MCF 10A (cell line): ENCODE measurements at regions of chrX and their contacts with region 1.

Region 1: DNA sequence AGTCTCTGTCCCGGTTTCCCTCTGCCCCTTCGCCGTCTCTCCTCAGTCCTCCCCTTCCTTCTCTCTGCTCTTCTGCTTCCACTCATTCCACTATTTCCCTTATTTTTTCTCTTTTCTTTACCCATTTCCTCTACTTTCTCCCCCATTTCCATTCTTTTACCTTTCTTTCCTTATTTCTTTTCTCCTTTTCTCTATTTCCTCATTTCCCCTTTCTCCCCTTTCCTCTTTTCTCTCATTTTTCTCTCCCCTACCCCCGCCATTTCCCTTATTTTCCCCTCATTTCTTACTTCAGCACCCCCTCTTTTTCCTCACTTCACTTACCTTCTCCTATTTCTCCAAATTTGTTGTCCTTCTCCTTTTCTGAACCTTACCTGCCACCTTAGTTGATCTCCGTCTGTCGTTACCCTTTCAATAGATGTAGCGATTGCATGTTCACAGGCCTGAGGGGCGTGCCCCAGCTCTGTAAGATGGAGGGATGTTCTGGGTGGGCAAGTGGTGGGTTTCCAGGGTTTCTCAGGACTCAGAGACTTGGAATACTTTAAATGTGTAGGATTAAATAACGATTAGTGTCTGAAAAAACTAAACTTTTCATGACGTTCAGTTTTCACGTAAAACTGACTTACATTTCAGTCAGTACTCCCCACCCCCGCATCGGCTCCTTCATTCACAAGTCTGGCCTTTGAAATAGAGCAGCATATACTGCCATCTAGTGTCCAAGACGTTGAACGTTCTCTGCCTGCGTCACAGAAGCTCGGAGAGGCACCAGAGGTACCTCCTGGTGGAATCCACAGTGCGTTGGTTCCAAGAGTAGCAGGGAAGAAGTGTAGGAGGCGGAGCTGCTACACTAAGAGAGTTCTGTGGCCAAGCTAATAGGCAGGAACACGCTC is 641 bp upstream of the NCBP2L start:
- DNase-seq: peak; percentile 87
- H3K4me3 Mint-ChIP-seq: peak overlapping the region; percentile 76
- H3K27ac Mint-ChIP-seq: peak overlapping the region; percentile 41
- H3K4me1 Mint-ChIP-seq: peaks cover 18% of the 10 kb centered on the region
- H3K27me3 Mint-ChIP-seq: peaks cover 45% of the 10 kb centered on the region
- CTCF ChIP-seq: peak; percentile 75

Region 2: DNA sequence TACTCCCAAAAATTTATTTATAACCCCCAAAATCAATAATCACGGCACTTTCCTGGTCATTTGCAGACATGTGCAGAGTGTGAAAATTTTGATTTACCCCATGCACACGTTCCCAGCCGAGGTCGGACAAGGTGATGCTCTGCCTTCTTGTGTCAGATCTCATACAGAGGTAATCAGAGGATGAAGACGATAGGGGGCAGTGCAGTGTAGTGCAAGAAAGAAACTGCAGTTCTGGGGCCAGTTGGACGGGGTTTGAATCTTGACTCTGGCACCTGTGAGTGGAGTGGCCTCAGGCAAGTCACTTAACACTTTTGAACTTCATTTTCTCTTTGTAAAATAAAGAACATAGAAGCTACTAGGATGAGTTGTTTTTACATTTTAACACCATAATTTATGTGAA is 239.1 kb before region 1 on chrX:
- CTCF ChIA-PET with region 1: interaction called, 5 read pairs
- POLR2A ChIA-PET with region 1: interaction called, 3 read pairs
- intact Hi-C with region 1: loop called (anchors 1 kb)
- DNase-seq: peak; percentile 64
- H3K4me3 Mint-ChIP-seq: no peak overlapping the region
- H3K27ac Mint-ChIP-seq: no peak overlapping the region
- H3K4me1 Mint-ChIP-seq: no peaks in the 10 kb centered on the region
- H3K27me3 Mint-ChIP-seq: peaks cover 65% of the 10 kb centered on the region
- CTCF ChIP-seq: peak; percentile 50

Region 3: GRCh38 chrX:107701493-107702121 is 75.3 kb before region 1 on chrX:
- CTCF ChIA-PET with region 1: no interaction called
- POLR2A ChIA-PET with region 1: interaction called, 13 read pairs
- intact Hi-C with region 1: no loop called
- DNase-seq: no peak
- H3K4me3 Mint-ChIP-seq: no peak overlapping the region
- H3K27ac Mint-ChIP-seq: no peak overlapping the region
- H3K4me1 Mint-ChIP-seq: peaks cover 16% of the 10 kb centered on the region
- H3K27me3 Mint-ChIP-seq: peaks cover 56% of the 10 kb centered on the region
- CTCF ChIP-seq: no peak

Region 4: GRCh38 chrX:107741404-107741790 is 35.5 kb before region 1 on chrX:
- CTCF ChIA-PET with region 1: interaction called, 7 read pairs
- POLR2A ChIA-PET with region 1: interaction called, 35 read pairs
- intact Hi-C with region 1: no loop called
- DNase-seq: no peak
- H3K4me3 Mint-ChIP-seq: no peak overlapping the region
- H3K27ac Mint-ChIP-seq: peak overlapping the region; percentile 93
- H3K4me1 Mint-ChIP-seq: peaks cover 37% of the 10 kb centered on the region
- H3K27me3 Mint-ChIP-seq: peaks cover 54% of the 10 kb centered on the region
- CTCF ChIP-seq: no peak

Region 5: DNA sequence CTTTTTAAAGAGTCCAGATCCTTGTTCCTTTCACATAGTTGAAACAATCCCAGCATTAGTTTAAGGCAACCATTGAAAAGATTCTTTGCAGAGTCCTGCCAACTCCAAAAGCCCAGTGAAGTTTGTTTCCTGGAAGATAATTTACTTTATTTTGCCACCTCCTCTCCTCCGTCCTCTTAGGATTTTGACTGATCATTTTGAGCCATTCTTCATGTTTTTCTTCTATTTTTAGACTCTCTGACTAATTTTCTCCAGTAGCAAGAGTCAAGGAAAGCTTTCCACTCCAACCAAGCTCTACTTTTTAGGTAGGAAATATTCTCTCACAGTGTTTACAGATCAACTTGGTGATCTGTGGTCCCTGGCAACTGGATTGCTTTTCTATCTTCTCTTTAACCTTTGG is 10.9 kb after region 1 on chrX:
- CTCF ChIA-PET with region 1: interaction called, 10 read pairs
- POLR2A ChIA-PET with region 1: interaction called, 3 read pairs
- intact Hi-C with region 1: no loop called
- DNase-seq: no peak
- H3K4me3 Mint-ChIP-seq: no peak overlapping the region
- H3K27ac Mint-ChIP-seq: no peak overlapping the region
- H3K4me1 Mint-ChIP-seq: no peaks in the 10 kb centered on the region
- H3K27me3 Mint-ChIP-seq: peaks cover 22% of the 10 kb centered on the region
- CTCF ChIP-seq: no peak